HCT116 (cell line): ENCODE measurements at regions of chr13 and their contacts with region 1.

Region 1: DNA sequence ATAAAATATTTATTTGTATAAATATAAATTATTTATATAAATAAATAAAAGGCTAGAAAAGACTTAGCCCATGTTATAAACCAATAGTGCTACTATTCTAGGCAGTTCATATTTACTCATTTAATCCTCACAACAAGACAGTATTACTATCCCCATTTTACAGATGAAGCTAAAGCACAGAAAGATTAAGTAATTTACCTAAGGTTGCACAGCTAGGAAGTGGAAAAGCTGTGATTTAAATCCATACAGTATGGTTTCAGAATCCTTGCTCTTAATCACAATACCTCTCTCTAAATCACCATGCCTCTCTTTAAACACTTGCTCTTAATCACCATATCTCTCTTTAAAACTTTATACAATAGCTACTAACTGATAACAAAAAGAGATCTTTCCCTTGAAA is 13.8 kb downstream of the SPRYD7 start:
- DNase-seq: no peak
- ATAC-seq: no peak
- H3K4me3 ChIP-seq: no peak overlapping the region
- H3K27ac ChIP-seq: no peak overlapping the region
- H3K4me1 ChIP-seq: no peaks in the 10 kb centered on the region
- H3K27me3 ChIP-seq: no peaks in the 10 kb centered on the region
- CTCF ChIP-seq: no peak
- POLR2A ChIP-seq: no peak
- RAD21 ChIP-seq: no peak

Region 2: GRCh38 chr13:49348751-49349150 is 573.5 kb before region 1 on chr13:
- CTCF ChIA-PET with region 1: no interaction called
- POLR2A ChIA-PET with region 1: no interaction called
- RAD21 ChIA-PET with region 1: no interaction called
- intact Hi-C with region 1: no loop called
- DNase-seq: no peak
- ATAC-seq: peak; percentile 40; the same call in 1 of the 2 replicates
- H3K4me3 ChIP-seq: no peak overlapping the region
- H3K27ac ChIP-seq: no peak overlapping the region
- H3K4me1 ChIP-seq: no peaks in the 10 kb centered on the region
- H3K27me3 ChIP-seq: no peaks in the 10 kb centered on the region
- CTCF ChIP-seq: no peak
- POLR2A ChIP-seq: no peak
- RAD21 ChIP-seq: no peak

Region 3: DNA sequence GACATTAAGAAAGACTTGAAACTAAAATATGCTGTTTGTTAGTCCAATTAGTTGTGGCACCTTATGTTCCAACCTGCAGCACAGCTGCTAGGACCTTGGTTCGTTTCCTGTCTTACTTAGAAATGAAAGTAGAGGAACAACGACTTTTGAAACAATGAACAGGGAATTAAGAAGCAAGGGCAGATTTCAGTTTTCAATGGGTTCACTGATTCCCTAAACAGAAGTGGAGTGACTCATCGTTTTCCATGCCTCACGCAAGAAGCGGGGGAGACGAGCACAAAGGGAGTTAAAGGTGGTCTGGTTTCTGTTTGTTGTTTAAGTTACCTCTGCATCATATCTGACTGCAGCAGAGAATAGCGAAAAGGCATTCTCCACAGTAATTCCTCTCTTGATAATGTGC is 381.7 kb before region 1 on chr13:
- CTCF ChIA-PET with region 1: no interaction called
- POLR2A ChIA-PET with region 1: no interaction called
- RAD21 ChIA-PET with region 1: no interaction called
- intact Hi-C with region 1: no loop called
- DNase-seq: no peak
- ATAC-seq: no peak
- H3K4me3 ChIP-seq: no peak overlapping the region
- H3K27ac ChIP-seq: no peak overlapping the region
- H3K4me1 ChIP-seq: no peaks in the 10 kb centered on the region
- H3K27me3 ChIP-seq: no peaks in the 10 kb centered on the region
- CTCF ChIP-seq: no peak
- POLR2A ChIP-seq: no peak
- RAD21 ChIP-seq: no peak

Region 4: GRCh38 chr13:49936085-49936940 is 14.0 kb after region 1 on chr13 and contains the start of gene SPRYD7:
- CTCF ChIA-PET with region 1: interaction called, 14 read pairs
- POLR2A ChIA-PET with region 1: interaction called, 4 read pairs
- RAD21 ChIA-PET with region 1: no interaction called
- intact Hi-C with region 1: no loop called
- DNase-seq: peak; percentile 97
- ATAC-seq: peak; percentile 96
- H3K4me3 ChIP-seq: peak within 1 kb of the TSS; percentile 72 to 79
- H3K27ac ChIP-seq: peak within 1 kb of the TSS; percentile 80
- H3K4me1 ChIP-seq: peaks cover 0 to 16% of the 10 kb centered on the region in 2 experiments; a peak in 2 of 4 replicates
- H3K27me3 ChIP-seq: no peaks in the 10 kb centered on the region
- CTCF ChIP-seq: peak; percentile 80 to 92 (median 85)
- POLR2A ChIP-seq: no peak
- RAD21 ChIP-seq: peak; percentile 42
- total RNA-seq, gene SPRYD7: 11.3 TPM

Region 5: DNA sequence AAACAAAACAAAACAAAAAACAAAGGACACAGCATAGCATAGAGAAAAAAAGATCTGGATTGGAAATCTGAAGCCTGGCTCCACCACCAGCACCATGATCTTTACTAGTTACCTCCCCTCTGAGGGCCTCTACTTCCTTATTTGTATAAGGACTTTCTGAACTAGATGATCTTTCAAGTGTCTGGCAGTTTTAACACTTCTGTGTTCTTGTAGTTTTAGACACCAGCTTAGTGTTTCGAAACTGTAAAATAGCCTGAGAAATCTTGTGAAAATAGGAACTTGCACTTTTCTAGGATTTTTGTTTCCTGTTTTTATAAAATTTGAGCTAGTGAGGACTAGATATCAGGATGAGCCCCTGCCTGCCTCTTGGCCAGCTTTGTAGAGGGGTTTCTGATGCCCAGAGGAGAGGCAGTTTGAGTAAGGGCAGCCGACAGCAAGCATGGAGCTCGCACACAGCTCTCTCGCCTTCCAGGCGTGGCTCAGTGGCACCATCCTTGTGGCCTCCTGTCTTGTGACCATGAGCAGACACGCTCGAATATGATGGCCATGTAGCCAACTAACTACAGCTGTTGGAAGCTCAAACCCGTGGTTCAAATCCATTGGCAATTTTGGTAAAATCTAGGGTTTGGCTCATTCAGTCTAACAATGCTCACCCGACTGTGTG is 411.9 kb after region 1 on chr13:
- CTCF ChIA-PET with region 1: no interaction called
- POLR2A ChIA-PET with region 1: no interaction called
- RAD21 ChIA-PET with region 1: no interaction called
- intact Hi-C with region 1: no loop called
- DNase-seq: no peak
- ATAC-seq: no peak
- H3K4me3 ChIP-seq: no peak overlapping the region
- H3K27ac ChIP-seq: no peak overlapping the region
- H3K4me1 ChIP-seq: no peaks in the 10 kb centered on the region; a peak in 1 of 4 replicates
- H3K27me3 ChIP-seq: no peaks in the 10 kb centered on the region
- CTCF ChIP-seq: no peak
- POLR2A ChIP-seq: no peak
- RAD21 ChIP-seq: no peak